Activated CD8-positive, alpha-beta T cell treated with anti-CD3 and anti-CD28 coated beads for 36 hours (primary cell): ENCODE measurements at regions of chr17 and their contacts with region 1.

Region 1: DNA sequence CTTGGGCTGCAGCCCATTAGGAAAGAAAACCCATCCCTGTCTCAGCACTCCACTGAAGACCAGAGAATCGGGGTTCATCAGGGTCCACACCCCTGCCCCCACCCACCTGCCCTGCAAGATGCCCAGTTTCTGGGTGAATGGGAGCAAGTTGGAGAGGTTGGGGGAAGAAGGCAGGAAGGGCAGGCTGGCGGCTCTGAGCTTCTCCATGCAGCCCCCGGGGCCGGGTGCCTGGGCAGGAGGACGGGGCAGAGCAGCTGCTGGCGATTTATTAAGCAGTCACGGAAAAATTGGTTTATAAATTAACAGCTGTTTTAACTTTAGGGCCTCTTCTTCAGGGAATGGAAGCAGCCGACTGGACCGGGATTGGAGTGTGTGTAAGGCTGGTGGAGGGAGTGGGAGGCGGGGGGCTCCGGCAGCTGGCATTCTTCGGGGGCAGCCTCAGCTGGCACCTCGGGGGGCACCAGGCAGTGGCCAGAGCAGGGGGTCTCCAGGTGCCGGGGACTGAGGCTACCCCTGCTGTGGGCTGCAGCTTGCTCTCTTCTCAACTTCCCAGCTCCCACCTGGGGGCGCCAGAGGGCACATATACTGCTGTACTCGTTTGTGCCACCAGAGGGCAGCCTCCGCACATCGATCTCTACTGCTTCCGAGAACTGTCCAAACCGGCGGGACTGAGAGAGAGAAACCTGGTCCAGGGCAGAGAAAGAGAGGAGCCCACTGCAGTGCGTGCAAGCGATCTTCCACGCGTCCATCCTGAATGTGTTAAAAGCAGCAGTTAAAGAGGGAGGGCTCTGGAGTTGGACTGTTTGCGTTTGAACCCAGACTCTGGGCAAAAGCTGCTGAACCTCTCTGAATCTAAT is 5.0 kb upstream of the PPP1R1B start:
- DNase-seq: peak; percentile 92
- ATAC-seq: peak; percentile 78
- H3K4me3 Mint-ChIP-seq: peak overlapping the region; percentile 65
- H3K27ac Mint-ChIP-seq: peak overlapping the region; percentile 78
- H3K4me1 Mint-ChIP-seq: peaks cover 18% of the 10 kb centered on the region
- H3K27me3 Mint-ChIP-seq: peaks cover 14% of the 10 kb centered on the region
- CTCF ChIP-seq: peak; percentile 100

Region 2: GRCh38 chr17:39547713-39548478 is 73.9 kb before region 1 on chr17:
- CTCF ChIA-PET with region 1: interaction called, 161 read pairs
- POLR2A ChIA-PET with region 1: interaction called, 6 read pairs
- intact Hi-C with region 1: loop called (anchors 5 kb)
- DNase-seq: peak; percentile 87
- ATAC-seq: peak; percentile 87
- H3K4me3 Mint-ChIP-seq: no peak overlapping the region
- H3K27ac Mint-ChIP-seq: no peak overlapping the region
- H3K4me1 Mint-ChIP-seq: no peaks in the 10 kb centered on the region
- H3K27me3 Mint-ChIP-seq: no peaks in the 10 kb centered on the region
- CTCF ChIP-seq: peak; percentile 98

Region 3: DNA sequence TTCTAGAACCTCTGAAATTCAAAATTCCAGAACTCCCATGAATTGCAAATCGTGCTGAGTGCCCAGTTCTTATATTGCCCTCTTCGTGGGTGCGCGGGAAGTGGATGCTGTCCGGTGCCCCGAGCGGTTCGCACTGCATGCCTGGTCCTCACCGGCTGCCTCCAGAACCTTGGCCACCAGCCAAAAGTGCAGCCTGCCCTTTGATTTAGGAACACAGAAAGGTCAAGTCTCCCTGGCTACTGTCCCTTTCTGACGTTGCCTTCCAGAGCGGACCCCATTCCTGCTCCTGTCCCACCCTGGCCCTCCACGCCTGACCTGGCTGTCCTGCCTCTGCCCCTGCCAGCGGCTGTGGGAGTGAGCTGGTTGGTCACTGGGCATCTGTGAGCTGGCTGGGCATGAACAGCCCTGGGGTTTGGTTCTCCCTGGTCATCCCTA is 23.7 kb before region 1 on chr17:
- CTCF ChIA-PET with region 1: interaction called, 33 read pairs
- POLR2A ChIA-PET with region 1: interaction called, 3 read pairs
- intact Hi-C with region 1: no loop called
- DNase-seq: no peak
- ATAC-seq: no peak
- H3K4me3 Mint-ChIP-seq: no peak overlapping the region
- H3K27ac Mint-ChIP-seq: no peak overlapping the region
- H3K4me1 Mint-ChIP-seq: peaks cover 17% of the 10 kb centered on the region
- H3K27me3 Mint-ChIP-seq: peaks cover 87% of the 10 kb centered on the region
- CTCF ChIP-seq: no peak

Region 4: GRCh38 chr17:39643271-39643670 is 21.5 kb after region 1 on chr17:
- CTCF ChIA-PET with region 1: interaction called, 224 read pairs
- POLR2A ChIA-PET with region 1: interaction called, 5 read pairs
- intact Hi-C with region 1: no loop called
- DNase-seq: no peak
- ATAC-seq: peak; percentile 12
- H3K4me3 Mint-ChIP-seq: no peak overlapping the region
- H3K27ac Mint-ChIP-seq: no peak overlapping the region
- H3K4me1 Mint-ChIP-seq: peaks cover 58% of the 10 kb centered on the region
- H3K27me3 Mint-ChIP-seq: no peaks in the 10 kb centered on the region
- CTCF ChIP-seq: no peak

Region 5: GRCh38 chr17:39676198-39676819 is 54.6 kb after region 1 on chr17:
- CTCF ChIA-PET with region 1: interaction called, 132 read pairs
- POLR2A ChIA-PET with region 1: interaction called, 3 read pairs
- intact Hi-C with region 1: no loop called
- DNase-seq: peak; percentile 76
- ATAC-seq: peak; percentile 78
- H3K4me3 Mint-ChIP-seq: no peak overlapping the region
- H3K27ac Mint-ChIP-seq: peak overlapping the region; percentile 59
- H3K4me1 Mint-ChIP-seq: peaks cover 65% of the 10 kb centered on the region
- H3K27me3 Mint-ChIP-seq: no peaks in the 10 kb centered on the region
- CTCF ChIP-seq: no peak

Region 6: DNA sequence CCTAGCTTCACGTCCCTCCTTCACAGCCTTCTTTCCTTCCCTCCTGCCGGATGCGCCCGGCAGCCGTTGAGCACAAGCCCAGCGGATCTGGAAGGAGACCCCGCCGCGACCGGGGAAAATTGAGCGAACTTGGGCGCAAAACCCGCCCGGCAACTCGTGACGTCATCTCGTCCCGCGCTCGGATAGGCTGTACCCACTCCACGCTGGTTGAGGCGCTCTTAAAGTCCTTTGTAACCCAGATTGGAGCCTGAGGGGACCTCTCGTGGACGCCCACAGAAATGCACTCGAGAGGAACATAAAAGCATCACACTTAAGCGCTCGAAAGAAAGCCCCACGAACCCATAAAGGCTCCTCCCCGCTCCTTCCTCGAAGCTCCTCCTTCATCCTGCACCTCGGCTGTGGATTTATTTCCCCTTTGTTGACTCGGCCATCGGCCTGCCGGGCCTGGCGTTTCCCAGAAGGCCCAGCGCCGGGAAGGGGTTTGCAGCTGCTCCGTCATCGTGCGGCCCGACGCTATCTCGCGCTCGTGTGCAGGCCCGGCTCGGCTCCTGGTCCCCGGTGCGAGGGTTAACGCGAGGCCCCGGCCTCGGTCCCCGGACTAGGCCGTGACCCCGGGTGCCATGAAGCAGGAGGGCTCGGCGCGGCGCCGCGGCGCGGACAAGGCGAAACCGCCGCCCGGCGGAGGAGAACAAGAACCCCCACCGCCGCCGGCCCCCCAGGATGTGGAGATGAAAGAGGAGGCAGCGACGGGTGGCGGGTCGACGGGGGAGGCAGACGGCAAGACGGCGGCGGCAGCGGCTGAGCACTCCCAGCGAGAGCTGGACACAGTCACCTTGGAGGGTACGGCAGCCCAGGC is 358.8 kb after region 1 on chr17 and contains the start of gene PSMD3:
- CTCF ChIA-PET with region 1: interaction called, 11 read pairs
- POLR2A ChIA-PET with region 1: interaction called, 5 read pairs
- intact Hi-C with region 1: loop called (anchors 10 kb)
- DNase-seq: peak; percentile 100
- ATAC-seq: peak; percentile 96
- H3K4me3 Mint-ChIP-seq: peak within 1 kb of the TSS; percentile 92
- H3K27ac Mint-ChIP-seq: peak within 1 kb of the TSS; percentile 92
- H3K4me1 Mint-ChIP-seq: peaks cover 25% of the 10 kb centered on the region
- H3K27me3 Mint-ChIP-seq: no peaks in the 10 kb centered on the region
- CTCF ChIP-seq: peak; percentile 50
- total RNA-seq, gene PSMD3: 149 to 153 TPM

Region 7: DNA sequence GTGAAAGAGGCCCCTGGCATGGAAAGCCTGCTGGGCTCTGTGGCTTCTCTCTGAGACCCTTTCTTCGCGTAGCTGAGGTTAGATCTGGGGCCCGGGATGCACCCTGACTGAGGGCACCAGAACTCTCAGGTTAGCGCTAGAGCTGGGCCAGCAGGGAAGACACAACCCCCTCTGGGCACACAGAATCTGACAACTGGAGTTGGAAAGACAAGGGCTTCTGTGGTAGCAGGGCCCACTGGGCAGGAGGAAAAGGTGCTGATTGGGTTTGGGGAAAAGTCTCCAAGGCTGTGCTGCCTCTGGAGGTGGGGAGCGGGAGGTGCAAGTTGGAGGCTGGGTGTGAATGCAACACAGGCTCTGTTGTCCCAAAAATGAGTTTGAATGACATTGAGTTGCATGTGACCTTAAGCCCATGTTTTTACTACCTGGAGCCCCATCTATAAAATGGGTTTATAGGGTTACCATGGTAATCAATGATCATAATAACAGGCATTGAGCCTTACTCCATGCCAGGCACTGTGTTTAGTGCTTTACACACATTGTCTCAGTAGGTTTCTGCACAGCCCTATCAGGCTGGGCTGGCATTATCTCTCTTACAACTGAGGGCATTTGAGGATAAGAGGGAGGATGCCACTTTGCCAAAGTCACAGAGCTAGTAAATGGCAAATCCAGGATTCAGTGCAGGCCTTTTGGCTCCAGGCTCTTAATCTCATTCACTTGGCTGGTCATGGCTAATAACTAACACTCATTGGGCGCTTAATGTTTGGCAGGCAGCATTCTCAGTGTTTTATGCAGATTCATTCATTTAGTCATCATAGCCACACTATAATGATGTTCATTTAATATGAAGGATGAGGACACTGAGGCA is 812.0 kb after region 1 on chr17:
- CTCF ChIA-PET with region 1: no interaction called
- POLR2A ChIA-PET with region 1: no interaction called
- intact Hi-C with region 1: no loop called
- DNase-seq: peak; percentile 43
- ATAC-seq: peak; percentile 82
- H3K4me3 Mint-ChIP-seq: no peak overlapping the region
- H3K27ac Mint-ChIP-seq: no peak overlapping the region
- H3K4me1 Mint-ChIP-seq: peaks cover 15% of the 10 kb centered on the region
- H3K27me3 Mint-ChIP-seq: no peaks in the 10 kb centered on the region
- CTCF ChIP-seq: peak; percentile 52